ENCODE measurements at regions of chr9 and their contacts with region 1.

Region 1: DNA sequence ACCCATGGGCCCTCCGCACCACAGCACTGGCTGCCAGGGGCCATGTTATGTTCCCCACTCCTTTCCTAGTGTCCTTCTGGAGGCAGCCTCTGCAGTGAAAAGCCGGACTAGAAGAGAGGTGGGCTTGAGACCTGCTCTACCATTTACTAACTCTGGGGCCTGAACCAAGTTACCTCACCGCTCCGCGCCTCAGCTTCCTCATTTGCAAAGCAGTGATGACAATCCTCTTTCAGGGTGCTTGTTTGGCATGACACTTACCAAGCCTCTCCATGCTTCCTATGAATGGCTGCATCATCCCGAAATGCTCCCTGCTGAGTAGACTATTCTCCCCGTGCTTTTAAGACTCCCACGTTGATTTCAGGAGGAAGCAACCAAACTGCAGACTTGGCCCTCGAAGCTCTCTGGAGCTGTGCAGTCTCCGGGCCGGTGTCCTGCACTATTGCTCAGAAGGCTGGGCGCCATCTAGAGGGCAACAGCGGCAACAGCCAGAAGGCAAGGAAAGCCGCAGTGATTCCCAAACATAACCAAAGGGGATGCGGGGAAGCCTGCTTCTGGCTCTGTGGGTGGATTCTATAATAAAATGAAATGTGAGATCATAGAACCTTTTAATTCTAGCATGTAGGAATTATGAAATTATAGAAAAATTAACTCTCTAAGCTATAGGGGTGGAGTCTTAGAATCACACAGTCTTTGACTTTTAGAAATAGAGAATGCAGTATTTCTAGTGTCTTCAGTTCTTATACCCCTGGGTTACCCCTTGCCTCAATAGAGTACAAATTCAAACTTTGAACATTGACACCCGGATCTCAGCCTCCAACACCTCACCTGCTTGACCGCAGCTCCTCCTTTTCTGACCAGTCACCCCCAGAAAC is 599.8 kb upstream of the BRINP1 start:
- DNase-seq: peak; percentile 56 to 85
- H3K4me3 ChIP-seq: no peak overlapping the region
- H3K27ac ChIP-seq: no peak overlapping the region
- H3K4me1 ChIP-seq: peaks cover 0 to 5% (median 4%) of the 10 kb centered on the region in 4 experiments; a peak in 3 of 7 replicates
- H3K27me3 ChIP-seq: no peaks in the 10 kb centered on the region
- CTCF ChIP-seq: peak; percentile 87 to 90 (median 89)
- EP300 ChIP-seq: no peak
- POLR2A ChIP-seq: no peak
- RAD21 ChIP-seq: peak; percentile 79 to 90

Region 2: DNA sequence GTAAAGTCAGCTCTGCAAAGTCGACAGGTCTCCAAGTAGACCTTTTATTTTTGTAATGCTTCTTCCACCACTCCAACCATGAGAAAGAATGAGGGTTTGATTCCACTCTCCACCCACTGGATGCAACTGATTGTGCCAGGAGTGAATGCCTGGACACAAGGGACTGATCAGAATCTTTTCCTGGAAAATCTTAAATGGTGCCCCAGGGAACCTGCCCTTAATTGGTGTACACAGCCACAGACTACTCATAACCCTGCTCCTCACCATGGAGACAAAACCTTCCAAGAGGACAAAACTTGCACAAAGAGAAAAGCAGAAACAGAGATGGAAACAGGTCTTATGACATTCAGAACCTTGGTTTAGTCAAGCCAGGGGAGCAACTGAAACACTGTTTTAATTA is 391.2 kb before region 1 on chr9:
- CTCF ChIA-PET with region 1: no interaction called
- POLR2A ChIA-PET with region 1: no interaction called
- DNase-seq: no peak
- H3K4me3 ChIP-seq: no peak overlapping the region
- H3K27ac ChIP-seq: no peak overlapping the region
- H3K4me1 ChIP-seq: no peaks in the 10 kb centered on the region
- H3K27me3 ChIP-seq: no peaks in the 10 kb centered on the region
- CTCF ChIP-seq: no peak
- EP300 ChIP-seq: no peak
- POLR2A ChIP-seq: no peak
- RAD21 ChIP-seq: no peak

Region 3: GRCh38 chr9:119924742-119925141 is 44.3 kb before region 1 on chr9:
- CTCF ChIA-PET with region 1: interaction called, 11 read pairs
- POLR2A ChIA-PET with region 1: no interaction called
- DNase-seq: no peak
- H3K4me3 ChIP-seq: no peak overlapping the region
- H3K27ac ChIP-seq: no peak overlapping the region
- H3K4me1 ChIP-seq: no peaks in the 10 kb centered on the region
- H3K27me3 ChIP-seq: no peaks in the 10 kb centered on the region
- CTCF ChIP-seq: peak; percentile 23 to 40 (median 37); a peak in 3 of 4 replicates
- EP300 ChIP-seq: no peak
- POLR2A ChIP-seq: no peak
- RAD21 ChIP-seq: peak; percentile 27 to 42; a peak in 3 of 4 replicates

Region 4: GRCh38 chr9:119951090-119951489 is 18.0 kb before region 1 on chr9:
- CTCF ChIA-PET with region 1: interaction called, 10 read pairs
- POLR2A ChIA-PET with region 1: interaction called, 3 read pairs
- DNase-seq: no peak
- H3K4me3 ChIP-seq: no peak overlapping the region
- H3K27ac ChIP-seq: no peak overlapping the region
- H3K4me1 ChIP-seq: peaks cover 0 to 3% (median 0%) of the 10 kb centered on the region in 4 experiments; a peak in 1 of 7 replicates
- H3K27me3 ChIP-seq: no peaks in the 10 kb centered on the region
- CTCF ChIP-seq: no peak
- EP300 ChIP-seq: no peak
- POLR2A ChIP-seq: no peak
- RAD21 ChIP-seq: no peak

Measured in H1 (cell line).